ENCODE measurements at regions of chr11 and their contacts with region 1.

Region 1: DNA sequence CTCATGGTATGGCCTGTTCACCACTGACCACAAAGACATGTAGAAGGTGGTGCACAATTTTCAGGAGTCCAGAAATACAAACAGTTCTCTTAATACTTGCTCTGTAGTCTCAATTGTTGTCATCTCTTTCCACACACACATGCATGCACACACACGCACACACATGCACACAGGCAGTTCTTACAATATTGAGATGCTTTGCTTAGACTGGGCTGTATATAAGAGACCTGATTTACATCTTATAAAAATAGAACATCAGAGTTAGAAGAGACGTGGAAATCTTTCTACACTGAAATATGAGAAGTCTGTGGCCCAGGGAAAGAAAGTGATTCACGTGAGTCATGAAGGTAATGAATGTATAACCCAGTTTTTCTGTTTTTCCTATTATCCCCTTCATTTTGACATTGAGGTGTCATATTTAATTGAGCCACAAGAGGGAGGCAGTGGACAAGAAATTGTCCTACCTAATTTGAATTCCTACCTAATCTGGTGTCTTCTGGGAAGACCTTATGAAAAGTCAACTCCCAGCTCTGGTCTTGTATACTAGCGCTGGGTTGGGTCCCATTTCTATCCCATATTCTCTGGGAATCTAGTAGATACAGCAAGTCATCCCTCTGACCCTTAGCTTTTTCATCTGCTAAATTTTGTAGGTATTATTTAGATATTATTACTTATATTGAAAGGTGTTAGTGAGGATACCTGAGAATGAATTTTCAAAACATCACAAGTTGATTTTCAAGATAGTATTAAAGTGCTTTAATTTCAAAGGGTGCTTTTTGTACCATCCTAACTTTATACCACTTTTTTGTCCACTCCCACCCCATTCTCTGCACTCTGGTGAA is 14.9 kb upstream of the MS4A4A start:
- DNase-seq: no peak
- H3K4me3 ChIP-seq: no peak overlapping the region
- H3K27ac ChIP-seq: no peak overlapping the region
- H3K4me1 ChIP-seq: peaks cover 0 to 3% (median 0%) of the 10 kb centered on the region in 4 experiments; a peak in 1 of 7 replicates
- H3K27me3 ChIP-seq: no peaks in the 10 kb centered on the region; a peak in 1 of 7 replicates
- CTCF ChIP-seq: peak in 2 of 3 experiments; percentile 60 to 66; a peak in 3 of 4 replicates
- EP300 ChIP-seq: no peak
- POLR2A ChIP-seq: no peak
- RAD21 ChIP-seq: peak; percentile 92

Region 2: DNA sequence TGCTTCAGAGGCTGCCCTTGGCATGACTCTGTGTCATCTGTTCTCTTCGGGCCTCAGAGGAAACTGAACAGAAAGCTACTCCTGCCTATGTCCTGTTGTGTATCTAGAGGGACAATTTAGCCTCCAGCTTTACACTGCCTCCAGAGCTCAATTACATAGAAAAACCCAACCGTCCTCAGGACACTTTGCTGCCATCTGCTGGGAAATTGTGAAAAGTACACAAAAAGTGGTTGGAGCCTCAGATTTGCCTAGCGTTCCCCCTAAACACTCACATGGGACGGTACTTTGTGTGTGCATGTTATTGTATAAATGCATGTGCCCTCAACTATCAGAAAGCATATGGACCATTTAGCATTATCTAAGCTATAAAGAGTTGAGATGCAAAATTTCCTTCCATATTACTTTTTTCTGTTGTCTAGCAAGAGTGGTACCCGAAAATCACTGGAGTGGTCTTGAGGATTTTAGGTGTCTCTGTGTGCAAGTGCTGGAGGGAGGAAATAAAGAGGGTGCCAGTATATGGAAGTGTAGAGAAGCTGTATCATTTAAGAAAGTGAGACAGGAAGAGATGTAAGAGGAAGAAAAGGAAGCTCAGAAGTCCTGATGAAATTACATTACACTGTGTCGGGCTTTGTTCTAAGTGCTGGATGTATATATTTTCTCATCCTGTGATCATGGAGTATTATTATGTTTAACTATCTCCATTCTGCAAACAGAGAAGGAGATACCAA is 13.9 kb before region 1 on chr11:
- CTCF ChIA-PET with region 1: interaction called, 19 read pairs
- POLR2A ChIA-PET with region 1: no interaction called
- DNase-seq: no peak
- H3K4me3 ChIP-seq: no peak overlapping the region
- H3K27ac ChIP-seq: no peak overlapping the region
- H3K4me1 ChIP-seq: no peaks in the 10 kb centered on the region
- H3K27me3 ChIP-seq: no peaks in the 10 kb centered on the region
- CTCF ChIP-seq: peak in 2 of 3 experiments; percentile 64; a peak in 3 of 4 replicates
- EP300 ChIP-seq: no peak
- POLR2A ChIP-seq: no peak
- RAD21 ChIP-seq: peak; percentile 76 to 82

Region 3: GRCh38 chr11:60363542-60364510 is 98.2 kb after region 1 on chr11:
- CTCF ChIA-PET with region 1: interaction called, 14 read pairs
- POLR2A ChIA-PET with region 1: no interaction called
- DNase-seq: peak in 1 of 2 experiments; percentile 77
- H3K4me3 ChIP-seq: peak overlapping the region in 1 of 4 experiments; percentile 38; a peak in 1 of 8 replicates
- H3K27ac ChIP-seq: peak overlapping the region; percentile 45; the same call in 1 of the 2 replicates
- H3K4me1 ChIP-seq: peaks cover 0 to 15% (median 4%) of the 10 kb centered on the region in 4 experiments; a peak in 4 of 7 replicates
- H3K27me3 ChIP-seq: no peaks in the 10 kb centered on the region
- CTCF ChIP-seq: peak in 2 of 3 experiments; percentile 73 to 87; a peak in 3 of 4 replicates
- EP300 ChIP-seq: no peak
- POLR2A ChIP-seq: no peak
- RAD21 ChIP-seq: peak; percentile 78 to 85

Region 4: DNA sequence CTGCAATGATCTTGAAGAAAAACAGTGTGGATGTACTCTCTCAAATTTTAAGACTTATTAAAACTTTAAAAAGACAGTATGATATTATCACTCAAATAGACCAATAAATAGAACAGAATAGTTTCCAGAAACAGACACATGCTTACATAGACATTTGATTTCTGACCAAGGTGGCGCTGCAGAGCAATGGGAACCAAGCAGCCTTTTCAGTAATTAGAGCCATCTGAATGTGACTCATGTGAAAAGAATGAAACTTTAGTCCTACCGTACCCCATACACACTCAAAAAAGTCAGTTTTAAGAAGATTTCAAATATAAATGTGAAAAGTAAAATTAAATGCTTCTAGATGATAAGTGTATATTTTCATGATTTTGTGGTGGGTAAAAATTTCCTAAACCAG is 359.7 kb after region 1 on chr11:
- CTCF ChIA-PET with region 1: interaction called, 39 read pairs
- POLR2A ChIA-PET with region 1: no interaction called
- DNase-seq: peak in 1 of 2 experiments; percentile 9
- H3K4me3 ChIP-seq: no peak overlapping the region
- H3K27ac ChIP-seq: no peak overlapping the region
- H3K4me1 ChIP-seq: no peaks in the 10 kb centered on the region
- H3K27me3 ChIP-seq: no peaks in the 10 kb centered on the region
- CTCF ChIP-seq: peak in 2 of 3 experiments; percentile 40 to 64; a peak in 3 of 4 replicates
- EP300 ChIP-seq: no peak
- POLR2A ChIP-seq: no peak
- RAD21 ChIP-seq: peak; percentile 15 to 18; a peak in 1 of 4 replicates

Measured in H1 (cell line).